IMR-90 (cell line): ENCODE measurements at regions of chr11 and their contacts with region 1.

Region 1: GRCh38 chr11:48109046-48109666 is 107.5 kb upstream of the OR4B1 start:
- DNase-seq: peak; percentile 63
- ATAC-seq: peak; percentile 62
- H3K4me3 ChIP-seq: no peak overlapping the region
- H3K27ac ChIP-seq: peak overlapping the region; percentile 25; the same call in 1 of the 2 replicates
- H3K4me1 ChIP-seq: peaks cover 9% of the 10 kb centered on the region
- H3K27me3 ChIP-seq: no peaks in the 10 kb centered on the region
- CTCF ChIP-seq: peak; percentile 57
- POLR2A ChIP-seq: no peak
- RAD21 ChIP-seq: peak; percentile 60

Region 2: DNA sequence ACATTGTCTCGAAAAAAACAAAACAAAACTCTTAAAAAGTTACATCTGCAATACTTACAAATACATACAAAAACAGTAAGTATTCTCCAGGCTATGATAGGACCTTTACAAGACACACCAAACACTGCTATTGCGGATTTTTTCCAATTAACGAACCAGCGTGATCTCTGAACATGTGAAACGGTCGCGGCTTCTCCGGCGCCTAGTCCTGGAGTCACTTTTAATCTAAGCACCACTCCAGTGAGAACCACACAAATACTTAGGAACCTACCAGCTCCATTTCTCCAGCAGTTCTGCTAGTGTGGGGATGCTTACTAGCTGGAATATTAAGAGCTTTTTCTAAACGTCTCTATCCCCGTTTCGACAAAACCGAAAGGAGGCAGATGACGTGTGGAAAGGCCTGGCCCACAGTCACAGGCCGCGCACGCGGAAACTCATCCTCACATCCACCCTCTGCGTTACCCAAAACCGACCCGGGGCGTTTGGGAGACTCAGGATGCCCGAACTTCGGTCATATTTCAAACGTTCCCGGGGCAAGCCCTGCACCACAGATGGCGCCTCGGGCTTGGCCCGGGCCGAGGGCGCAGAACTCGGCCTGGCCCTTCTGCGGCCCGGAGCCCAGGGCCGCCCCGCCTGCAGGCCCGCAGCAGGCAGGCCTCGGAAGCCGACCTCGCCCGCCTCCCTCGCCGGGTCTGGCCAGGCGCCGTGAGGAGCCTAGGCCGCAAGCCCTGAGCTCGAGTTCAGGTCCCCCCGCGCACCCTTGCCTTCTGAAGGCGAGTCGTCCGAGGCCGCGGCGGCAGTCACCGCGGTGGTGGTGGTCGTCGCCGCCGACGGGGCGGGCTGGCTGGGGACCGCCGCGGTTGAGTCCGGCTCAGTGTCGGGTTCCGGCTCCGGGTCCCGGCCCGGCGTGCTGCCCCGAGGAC is 342.6 kb before region 1 on chr11:
- CTCF ChIA-PET with region 1: no interaction called
- POLR2A ChIA-PET with region 1: no interaction called
- dilution Hi-C with region 1: no loop called
- in situ Hi-C with region 1: no loop called
- intact Hi-C with region 1: loop called (anchors 1 kb)
- DNase-seq: peak; percentile 66
- ATAC-seq: peak; percentile 9
- H3K4me3 ChIP-seq: peak overlapping the region; percentile 65
- H3K27ac ChIP-seq: peak overlapping the region; percentile 92
- H3K4me1 ChIP-seq: 0 out of 2 replicates have a peak, but pooled peaks cover 1% of the 10 kb centered on the region
- H3K27me3 ChIP-seq: no peaks in the 10 kb centered on the region
- CTCF ChIP-seq: no peak
- POLR2A ChIP-seq: no peak
- RAD21 ChIP-seq: no peak

Region 3: DNA sequence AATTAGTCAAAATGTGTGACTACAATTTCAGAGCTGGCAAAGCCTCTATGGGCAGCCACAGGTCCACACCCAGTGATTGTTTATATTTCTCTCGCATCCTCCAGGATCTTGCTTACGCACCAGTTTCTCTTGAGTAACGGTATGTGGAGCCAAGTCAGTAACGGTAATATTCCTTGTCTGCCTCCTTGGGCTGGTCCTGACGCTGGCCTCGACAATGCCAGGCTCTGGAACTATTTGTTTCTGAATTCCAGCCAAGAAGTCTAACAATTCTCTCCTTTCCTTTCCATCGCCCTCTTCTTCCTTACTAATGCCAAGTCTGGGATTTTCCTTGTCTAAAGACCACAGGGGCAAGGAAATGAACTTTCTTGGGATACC is 251.0 kb before region 1 on chr11:
- CTCF ChIA-PET with region 1: no interaction called
- POLR2A ChIA-PET with region 1: no interaction called
- dilution Hi-C with region 1: no loop called
- in situ Hi-C with region 1: loop called (anchors 10 kb)
- intact Hi-C with region 1: loop called (anchors 1 kb)
- DNase-seq: peak; percentile 72
- ATAC-seq: peak; percentile 56; the same call in 1 of the 2 replicates
- H3K4me3 ChIP-seq: no peak overlapping the region
- H3K27ac ChIP-seq: no peak overlapping the region
- H3K4me1 ChIP-seq: peaks cover 2% of the 10 kb centered on the region; the same call in 1 of the 2 replicates
- H3K27me3 ChIP-seq: no peaks in the 10 kb centered on the region
- CTCF ChIP-seq: no peak
- POLR2A ChIP-seq: no peak
- RAD21 ChIP-seq: no peak

Region 4: GRCh38 chr11:47980245-47981049 is 128.7 kb before region 1 on chr11 and contains the start of gene PTPRJ:
- CTCF ChIA-PET with region 1: interaction called, 3 read pairs
- POLR2A ChIA-PET with region 1: no interaction called
- dilution Hi-C with region 1: no loop called
- in situ Hi-C with region 1: no loop called
- intact Hi-C with region 1: loop called (anchors 1 kb)
- DNase-seq: peak; percentile 48
- ATAC-seq: peak; percentile 69
- H3K4me3 ChIP-seq: peak within 1 kb of the TSS; percentile 96
- H3K27ac ChIP-seq: peak within 1 kb of the TSS; percentile 77
- H3K4me1 ChIP-seq: peaks cover 19% of the 10 kb centered on the region
- H3K27me3 ChIP-seq: no peaks in the 10 kb centered on the region
- CTCF ChIP-seq: 0 out of 2 replicates have a peak, but pooled peaks have one; percentile 4
- POLR2A ChIP-seq: peak; percentile 18; the same call in 1 of the 2 replicates
- RAD21 ChIP-seq: no peak
- total RNA-seq, gene PTPRJ: 13.6 and 14.9 TPM in 2 replicates

Region 5: GRCh38 chr11:48063424-48063978 is 45.7 kb before region 1 on chr11:
- CTCF ChIA-PET with region 1: no interaction called
- POLR2A ChIA-PET with region 1: no interaction called
- dilution Hi-C with region 1: no loop called
- in situ Hi-C with region 1: no loop called
- intact Hi-C with region 1: loop called (anchors 1 kb)
- DNase-seq: peak; percentile 99
- ATAC-seq: peak; percentile 82
- H3K4me3 ChIP-seq: no peak overlapping the region
- H3K27ac ChIP-seq: peak overlapping the region; percentile 31; the same call in 1 of the 2 replicates
- H3K4me1 ChIP-seq: peaks cover 15% of the 10 kb centered on the region
- H3K27me3 ChIP-seq: no peaks in the 10 kb centered on the region
- CTCF ChIP-seq: no peak
- POLR2A ChIP-seq: no peak
- RAD21 ChIP-seq: peak; percentile 16

Region 6: GRCh38 chr11:48341466-48341865 is 232.3 kb after region 1 on chr11:
- CTCF ChIA-PET with region 1: no interaction called
- POLR2A ChIA-PET with region 1: no interaction called
- dilution Hi-C with region 1: no loop called
- in situ Hi-C with region 1: no loop called
- intact Hi-C with region 1: no loop called
- DNase-seq: no peak
- ATAC-seq: no peak
- H3K4me3 ChIP-seq: no peak overlapping the region
- H3K27ac ChIP-seq: no peak overlapping the region
- H3K4me1 ChIP-seq: no peaks in the 10 kb centered on the region
- H3K27me3 ChIP-seq: no peaks in the 10 kb centered on the region
- CTCF ChIP-seq: no peak
- POLR2A ChIP-seq: no peak
- RAD21 ChIP-seq: no peak